Activated naive CD4-positive, alpha-beta T cell treated with anti-CD3 and anti-CD28 coated beads for 36 hours (primary cell): ENCODE measurements at regions of chr1 and their contacts with region 1.

Region 1: DNA sequence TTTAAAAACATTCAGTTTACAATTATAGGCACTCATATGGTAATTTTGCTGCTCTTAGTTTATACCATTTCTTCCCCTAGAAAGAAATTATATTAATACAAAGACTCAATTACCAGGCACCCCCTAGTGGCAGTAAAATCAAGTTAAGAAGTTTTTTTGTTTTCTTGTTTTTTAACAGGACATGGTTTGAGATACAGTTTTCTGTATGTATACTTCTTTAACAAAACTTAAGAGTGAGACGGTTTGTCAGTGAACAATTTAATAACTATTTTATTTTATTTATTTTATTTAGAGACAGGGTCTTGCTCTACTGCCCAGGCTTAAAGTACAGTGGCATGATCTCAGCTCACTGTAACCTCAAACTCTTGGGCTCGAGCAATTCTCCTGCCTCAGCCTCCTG is 224.6 kb downstream of the FAF1 start:
- DNase-seq: no peak
- H3K4me3 Mint-ChIP-seq: no peak overlapping the region
- H3K27ac Mint-ChIP-seq: no peak overlapping the region
- H3K4me1 Mint-ChIP-seq: no peaks in the 10 kb centered on the region
- H3K27me3 Mint-ChIP-seq: no peaks in the 10 kb centered on the region

Region 2: GRCh38 chr1:50562106-50562505 is 173.3 kb before region 1 on chr1:
- CTCF ChIA-PET with region 1: interaction called, 14 read pairs
- intact Hi-C with region 1: no loop called
- DNase-seq: no peak
- H3K4me3 Mint-ChIP-seq: no peak overlapping the region
- H3K27ac Mint-ChIP-seq: no peak overlapping the region
- H3K4me1 Mint-ChIP-seq: no peaks in the 10 kb centered on the region
- H3K27me3 Mint-ChIP-seq: no peaks in the 10 kb centered on the region